BJ (cell line): ENCODE measurements at regions of chr19 and their contacts with region 1.

Region 1: DNA sequence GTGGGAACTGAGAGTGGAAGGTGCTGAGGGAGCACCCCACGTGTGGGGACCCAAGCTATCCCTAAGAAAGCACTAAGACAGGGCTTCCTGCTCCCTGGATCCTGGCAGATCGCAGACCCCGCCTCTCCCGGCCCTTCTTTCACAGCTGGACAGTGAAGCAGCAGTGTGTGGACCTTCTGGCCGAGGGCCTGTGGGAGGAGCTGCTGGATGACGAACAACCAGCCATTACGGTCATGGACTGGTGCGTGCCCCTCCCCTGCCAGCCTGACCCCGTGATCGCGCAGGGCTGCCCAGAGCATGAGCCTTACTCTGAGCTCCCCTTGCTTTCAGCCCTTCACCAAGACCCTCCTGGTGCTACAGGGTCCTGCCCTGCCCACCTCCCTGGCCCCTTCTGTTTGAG is 2.3 kb downstream of the NCCRP1 start:
- DNase-seq: peak; percentile 3
- H3K4me3 ChIP-seq: no peak overlapping the region
- H3K27me3 ChIP-seq: peaks cover 32% of the 10 kb centered on the region
- CTCF ChIP-seq: no peak

Region 2: GRCh38 chr19:39187559-39187957 is 11.5 kb before region 1 on chr19:
- CTCF ChIA-PET with region 1: interaction called, 15 read pairs
- POLR2A ChIA-PET with region 1: no interaction called
- DNase-seq: no peak
- H3K4me3 ChIP-seq: no peak overlapping the region
- H3K27me3 ChIP-seq: no peaks in the 10 kb centered on the region
- CTCF ChIP-seq: no peak